ENCODE measurements at regions of chr3 and their contacts with region 1.

Region 1: DNA sequence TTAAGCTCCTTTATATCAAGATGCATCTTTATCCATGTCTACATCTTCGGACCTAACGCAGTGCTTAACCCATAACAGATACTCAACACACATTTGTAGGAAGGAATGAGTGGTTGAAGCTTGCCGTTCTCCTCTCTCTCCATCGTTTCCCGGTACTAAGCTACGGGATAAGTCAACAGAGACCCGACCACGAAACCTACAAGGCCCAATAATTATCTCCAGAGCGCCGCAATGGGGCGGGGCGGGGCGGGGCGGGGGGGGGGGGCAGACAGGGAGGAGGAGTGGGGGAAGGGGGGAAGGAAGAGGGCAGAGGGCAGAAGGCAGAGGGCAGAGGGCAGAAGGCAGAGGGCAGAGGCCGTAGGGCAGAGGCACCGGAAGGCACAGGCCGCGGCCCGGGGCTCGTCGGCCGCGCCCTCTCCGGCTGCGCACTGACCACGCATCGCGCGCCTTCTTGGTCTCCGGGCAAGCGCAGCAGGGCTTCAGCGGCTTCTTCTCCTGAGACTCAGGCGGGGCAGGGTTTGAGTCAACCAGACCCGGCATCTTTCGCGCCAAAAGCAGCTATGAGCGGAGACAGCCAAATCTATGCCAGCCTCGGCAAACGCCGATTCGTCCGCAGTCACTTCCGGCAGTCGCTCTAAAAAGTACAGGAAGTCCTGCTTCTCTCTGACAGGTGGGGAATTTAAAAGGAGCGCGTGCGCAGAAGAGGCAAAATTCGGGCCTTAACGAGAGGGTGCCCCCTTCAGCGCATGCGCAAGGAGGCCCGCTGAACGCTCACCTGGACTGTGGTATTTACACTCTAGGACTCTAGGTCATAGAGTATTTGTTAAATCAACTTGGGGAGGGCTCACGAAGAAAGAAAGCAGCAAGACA is at the start of gene COX17:
- DNase-seq: peak; percentile 99
- ATAC-seq: peak; percentile 78
- H3K4me3 ChIP-seq: peak within 1 kb of the TSS; percentile 84
- H3K27ac ChIP-seq: peak within 1 kb of the TSS; percentile 71
- H3K4me1 ChIP-seq: peaks cover 18% of the 10 kb centered on the region
- H3K27me3 ChIP-seq: no peaks in the 10 kb centered on the region
- CTCF ChIP-seq: no peak
- total RNA-seq, gene COX17: 102 and 159 TPM in 2 replicates

Region 2: DNA sequence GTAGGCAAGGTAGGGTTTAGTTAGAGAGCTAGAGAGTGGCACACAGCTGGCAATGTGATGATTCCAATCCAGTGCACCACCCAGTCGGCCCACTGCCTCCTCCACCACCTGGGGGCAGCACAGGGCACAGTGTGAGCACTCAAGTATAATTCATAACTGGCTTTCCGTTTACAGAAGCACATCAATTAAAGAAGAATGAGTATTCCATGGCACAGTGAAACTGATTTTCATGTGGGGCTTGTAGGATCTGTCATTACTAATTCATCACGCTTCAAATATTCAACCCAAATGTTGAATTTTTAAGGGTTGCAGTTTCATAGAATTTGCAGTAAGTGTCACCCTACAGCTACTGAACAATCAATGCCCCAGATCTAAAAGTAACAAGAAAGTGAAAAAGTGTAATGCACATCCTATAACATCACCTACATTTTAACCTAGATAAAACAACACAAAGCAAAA is 792.2 kb before region 1 on chr3:
- CTCF ChIA-PET with region 1: no interaction called
- POLR2A ChIA-PET with region 1: no interaction called
- intact Hi-C with region 1: loop called (anchors 2 kb)
- DNase-seq: peak; percentile 77
- ATAC-seq: peak; percentile 91
- H3K4me3 ChIP-seq: no peak overlapping the region
- H3K27ac ChIP-seq: no peak overlapping the region
- H3K4me1 ChIP-seq: no peaks in the 10 kb centered on the region
- H3K27me3 ChIP-seq: peaks cover 50% of the 10 kb centered on the region
- CTCF ChIP-seq: peak; percentile 99

Region 3: GRCh38 chr3:119279101-119279554 is 397.9 kb before region 1 on chr3:
- CTCF ChIA-PET with region 1: no interaction called
- POLR2A ChIA-PET with region 1: no interaction called
- intact Hi-C with region 1: loop called (anchors 1 kb)
- DNase-seq: no peak
- ATAC-seq: peak; percentile 52; the same call in 1 of the 2 replicates
- H3K4me3 ChIP-seq: no peak overlapping the region
- H3K27ac ChIP-seq: no peak overlapping the region
- H3K4me1 ChIP-seq: no peaks in the 10 kb centered on the region
- H3K27me3 ChIP-seq: no peaks in the 10 kb centered on the region
- CTCF ChIP-seq: no peak

Region 4: DNA sequence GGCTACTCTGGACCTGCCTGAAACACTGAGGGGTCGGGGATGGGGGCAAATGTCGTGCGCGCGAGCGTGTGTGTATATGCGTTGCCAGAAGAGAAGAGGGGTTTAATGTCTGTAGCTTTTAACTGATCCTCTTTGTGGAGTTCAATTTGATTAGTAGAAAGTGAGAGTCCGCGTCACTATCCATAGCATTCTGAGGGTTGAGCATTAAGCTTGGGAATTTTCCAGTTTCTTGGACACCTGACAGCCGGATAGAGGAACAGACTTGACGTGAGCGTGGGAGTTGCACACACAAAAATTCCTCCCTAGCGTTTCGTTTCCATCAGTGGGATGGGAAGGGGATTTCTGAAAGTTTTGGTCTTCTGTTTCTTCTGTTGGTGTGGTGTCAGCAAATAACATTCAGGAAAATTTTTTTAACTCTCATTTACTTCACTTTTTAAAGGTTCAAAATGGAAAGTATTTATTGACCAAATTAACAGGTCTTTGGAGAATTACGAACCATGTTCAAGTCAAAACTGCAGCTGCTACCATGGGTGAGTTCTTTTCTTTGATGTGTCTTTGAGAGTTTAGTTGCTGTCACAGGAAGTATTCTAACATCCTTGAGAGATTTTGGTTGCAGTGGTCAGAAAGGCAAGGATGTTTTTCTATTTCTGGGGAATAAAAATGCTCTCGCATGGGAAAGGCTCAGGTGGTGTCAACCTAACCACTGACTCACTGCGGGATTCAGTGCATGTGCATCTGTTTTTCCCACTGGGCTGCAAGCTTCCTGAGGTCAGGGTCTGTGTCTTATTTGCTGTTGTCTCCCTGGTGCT is 207.4 kb before region 1 on chr3:
- CTCF ChIA-PET with region 1: no interaction called
- POLR2A ChIA-PET with region 1: no interaction called
- intact Hi-C with region 1: loop called (anchors 1 kb)
- DNase-seq: peak; percentile 53
- ATAC-seq: peak; percentile 43
- H3K4me3 ChIP-seq: peak overlapping the region; percentile 85
- H3K27ac ChIP-seq: no peak overlapping the region
- H3K4me1 ChIP-seq: peaks cover 16% of the 10 kb centered on the region
- H3K27me3 ChIP-seq: no peaks in the 10 kb centered on the region
- CTCF ChIP-seq: no peak; the same call in 1 of the 2 replicates

Region 5: GRCh38 chr3:119524931-119525662 is 151.9 kb before region 1 on chr3:
- CTCF ChIA-PET with region 1: interaction called, 11 read pairs
- POLR2A ChIA-PET with region 1: no interaction called
- intact Hi-C with region 1: loop called (anchors 1 kb)
- DNase-seq: peak; percentile 45
- ATAC-seq: peak; percentile 70
- H3K4me3 ChIP-seq: no peak overlapping the region
- H3K27ac ChIP-seq: no peak overlapping the region
- H3K4me1 ChIP-seq: no peaks in the 10 kb centered on the region
- H3K27me3 ChIP-seq: no peaks in the 10 kb centered on the region
- CTCF ChIP-seq: peak; percentile 73

Region 6: GRCh38 chr3:119618905-119619493 is 58.0 kb before region 1 on chr3:
- CTCF ChIA-PET with region 1: no interaction called
- POLR2A ChIA-PET with region 1: interaction called, 11 read pairs
- intact Hi-C with region 1: loop called (anchors 1 kb)
- DNase-seq: peak; percentile 67
- ATAC-seq: peak; percentile 91
- H3K4me3 ChIP-seq: peak overlapping the region; percentile 7; the same call in 1 of the 2 replicates
- H3K27ac ChIP-seq: peak overlapping the region; percentile 17
- H3K4me1 ChIP-seq: peaks cover 13% of the 10 kb centered on the region
- H3K27me3 ChIP-seq: no peaks in the 10 kb centered on the region
- CTCF ChIP-seq: peak; percentile 37; the same call in 1 of the 2 replicates

Region 7: GRCh38 chr3:120013481-120013880 is 336.5 kb after region 1 on chr3:
- CTCF ChIA-PET with region 1: no interaction called
- POLR2A ChIA-PET with region 1: interaction called, 10 read pairs
- intact Hi-C with region 1: no loop called
- DNase-seq: no peak
- ATAC-seq: peak; percentile 72
- H3K4me3 ChIP-seq: no peak overlapping the region
- H3K27ac ChIP-seq: no peak overlapping the region
- H3K4me1 ChIP-seq: peaks cover 3% of the 10 kb centered on the region; the same call in 1 of the 2 replicates
- H3K27me3 ChIP-seq: no peaks in the 10 kb centered on the region
- CTCF ChIP-seq: no peak